Common myeloid progenitor, CD34-positive (primary cell): ENCODE measurements at regions of chr12 and their contacts with region 1.

Region 1: GRCh38 chr12:62205346-62205745 is 54.9 kb upstream of the USP15 start:
- DNase-seq: no peak
- H3K4me3 ChIP-seq: no peak overlapping the region
- H3K27ac ChIP-seq: no peak overlapping the region
- H3K4me1 ChIP-seq: no peaks in the 10 kb centered on the region
- H3K27me3 ChIP-seq: no peaks in the 10 kb centered on the region

Region 2: GRCh38 chr12:62166510-62166909 is 38.8 kb before region 1 on chr12:
- CTCF ChIA-PET with region 1: no interaction called
- POLR2A ChIA-PET with region 1: no interaction called
- DNase-seq: no peak
- H3K4me3 ChIP-seq: no peak overlapping the region
- H3K27ac ChIP-seq: no peak overlapping the region
- H3K4me1 ChIP-seq: peaks cover 0 to 5% (median 1%) of the 10 kb centered on the region in 4 experiments
- H3K27me3 ChIP-seq: no peaks in the 10 kb centered on the region

Region 3: GRCh38 chr12:62192903-62193250 is 12.5 kb before region 1 on chr12:
- CTCF ChIA-PET with region 1: interaction called, 10 read pairs
- POLR2A ChIA-PET with region 1: no interaction called
- DNase-seq: no peak
- H3K4me3 ChIP-seq: peak overlapping the region in 4 of 7 experiments; percentile 57 to 97 (median 88)
- H3K27ac ChIP-seq: no peak overlapping the region
- H3K4me1 ChIP-seq: peaks cover 2 to 35% (median 17%) of the 10 kb centered on the region in 4 experiments
- H3K27me3 ChIP-seq: peaks cover 0 to 7% (median 0%) of the 10 kb centered on the region in 5 experiments